ENCODE measurements at regions of chr4 and their contacts with region 1.

Region 1: DNA sequence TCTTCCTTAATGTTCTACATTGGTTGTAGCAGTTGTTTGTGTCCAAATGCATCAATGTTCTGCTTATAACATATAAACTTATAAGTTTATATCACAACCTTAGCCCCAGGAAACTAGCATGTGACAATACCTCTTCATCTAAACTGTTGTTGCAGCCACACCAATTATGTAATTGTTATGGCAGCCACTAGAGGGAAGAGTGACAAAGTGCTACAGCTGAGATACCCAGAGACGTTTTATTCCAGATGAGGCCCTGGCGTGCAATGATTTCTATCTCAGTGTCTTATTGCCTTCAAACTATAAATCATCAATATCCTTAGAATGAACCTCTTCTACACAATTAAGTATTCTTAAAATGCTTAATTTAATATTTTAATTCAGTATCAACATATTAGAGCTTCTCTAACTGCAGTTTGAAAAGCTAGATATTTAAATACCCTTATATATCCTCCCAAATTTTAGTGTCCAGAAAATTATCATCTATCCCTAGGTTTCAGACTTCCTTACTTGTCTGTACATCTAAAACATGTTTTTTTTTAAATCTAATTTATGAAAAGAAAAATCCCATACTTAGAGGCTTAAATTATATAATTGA is 171.6 kb downstream of the PCDH10 start:
- DNase-seq: peak; percentile 51
- H3K4me3 ChIP-seq: no peak overlapping the region
- H3K27ac ChIP-seq: no peak overlapping the region
- H3K4me1 ChIP-seq: no peaks in the 10 kb centered on the region
- H3K27me3 ChIP-seq: no peaks in the 10 kb centered on the region
- CTCF ChIP-seq: peak; percentile 54 to 63
- POLR2A ChIP-seq: no peak

Region 2: DNA sequence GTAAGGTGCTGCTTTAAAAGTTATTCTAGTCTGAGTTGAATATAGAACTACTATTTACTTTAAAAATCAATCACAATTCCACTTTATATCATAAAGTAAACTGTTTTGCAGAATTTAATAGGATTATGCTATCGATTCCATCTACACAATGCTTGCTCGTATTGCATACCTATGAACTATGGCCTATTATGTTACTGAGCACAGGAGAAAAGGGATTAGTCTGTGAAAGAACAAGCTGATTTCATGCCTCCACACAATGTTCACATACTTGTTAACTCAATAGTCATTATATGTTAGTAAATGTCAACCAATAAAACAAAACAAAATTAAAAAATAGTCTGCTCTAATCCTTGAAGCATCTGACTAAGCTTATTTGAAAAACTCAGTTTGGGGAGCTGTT is 52.0 kb after region 1 on chr4:
- CTCF ChIA-PET with region 1: no interaction called
- POLR2A ChIA-PET with region 1: no interaction called
- dilution Hi-C with region 1: no loop called
- intact Hi-C with region 1: no loop called
- DNase-seq: no peak
- H3K4me3 ChIP-seq: no peak overlapping the region
- H3K27ac ChIP-seq: no peak overlapping the region
- H3K4me1 ChIP-seq: no peaks in the 10 kb centered on the region
- H3K27me3 ChIP-seq: no peaks in the 10 kb centered on the region
- CTCF ChIP-seq: no peak
- POLR2A ChIP-seq: no peak

Region 3: GRCh38 chr4:133424605-133425004 is 103.9 kb after region 1 on chr4:
- CTCF ChIA-PET with region 1: no interaction called
- POLR2A ChIA-PET with region 1: no interaction called
- dilution Hi-C with region 1: no loop called
- intact Hi-C with region 1: no loop called
- DNase-seq: no peak
- H3K4me3 ChIP-seq: no peak overlapping the region
- H3K27ac ChIP-seq: no peak overlapping the region
- H3K4me1 ChIP-seq: no peaks in the 10 kb centered on the region
- H3K27me3 ChIP-seq: no peaks in the 10 kb centered on the region
- CTCF ChIP-seq: no peak
- POLR2A ChIP-seq: no peak

Region 4: DNA sequence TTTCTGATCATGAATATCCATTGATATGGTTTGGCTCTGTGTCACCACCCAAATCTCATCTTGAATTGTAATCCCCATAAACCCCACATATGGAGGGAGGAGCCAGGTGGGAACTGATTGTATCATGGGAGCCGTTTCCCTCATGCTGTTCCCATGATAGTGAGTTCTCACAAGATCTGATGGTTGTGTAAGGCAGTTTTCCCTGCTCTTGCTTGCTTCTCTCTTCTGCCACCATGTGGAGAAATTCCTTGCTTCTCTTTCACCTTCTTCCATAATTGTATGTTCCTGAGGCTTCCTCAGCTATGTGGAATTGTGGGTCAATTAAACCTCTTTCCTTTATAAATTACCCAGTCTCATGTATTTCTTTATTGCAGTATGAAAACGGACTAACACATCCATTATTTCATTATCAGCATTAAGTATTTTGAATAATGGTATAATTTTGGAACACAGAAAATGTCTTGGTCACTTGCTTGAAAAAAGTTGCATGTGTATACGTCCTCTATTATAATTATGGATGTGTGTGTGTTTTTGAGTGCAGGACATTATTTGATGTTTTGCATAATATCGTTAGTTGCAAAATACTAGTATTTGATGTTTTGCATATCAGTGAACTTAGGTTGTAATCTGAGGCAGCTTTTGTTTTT is 163.1 kb after region 1 on chr4:
- CTCF ChIA-PET with region 1: interaction called, 23 read pairs
- POLR2A ChIA-PET with region 1: no interaction called
- dilution Hi-C with region 1: no loop called
- intact Hi-C with region 1: loop called (anchors 2 kb)
- DNase-seq: peak; percentile 55
- H3K4me3 ChIP-seq: no peak overlapping the region
- H3K27ac ChIP-seq: no peak overlapping the region
- H3K4me1 ChIP-seq: no peaks in the 10 kb centered on the region
- H3K27me3 ChIP-seq: no peaks in the 10 kb centered on the region
- CTCF ChIP-seq: peak; percentile 20 to 42
- POLR2A ChIP-seq: no peak

Region 5: GRCh38 chr4:133550436-133550835 is 229.8 kb after region 1 on chr4:
- CTCF ChIA-PET with region 1: no interaction called
- POLR2A ChIA-PET with region 1: no interaction called
- dilution Hi-C with region 1: no loop called
- intact Hi-C with region 1: no loop called
- DNase-seq: no peak
- H3K4me3 ChIP-seq: no peak overlapping the region
- H3K27ac ChIP-seq: no peak overlapping the region
- H3K4me1 ChIP-seq: no peaks in the 10 kb centered on the region
- H3K27me3 ChIP-seq: no peaks in the 10 kb centered on the region
- CTCF ChIP-seq: no peak
- POLR2A ChIP-seq: no peak

Region 6: GRCh38 chr4:133683967-133684366 is 363.3 kb after region 1 on chr4:
- CTCF ChIA-PET with region 1: no interaction called
- POLR2A ChIA-PET with region 1: no interaction called
- dilution Hi-C with region 1: no loop called
- intact Hi-C with region 1: no loop called
- DNase-seq: no peak
- H3K4me3 ChIP-seq: no peak overlapping the region
- H3K27ac ChIP-seq: no peak overlapping the region
- H3K4me1 ChIP-seq: no peaks in the 10 kb centered on the region
- H3K27me3 ChIP-seq: no peaks in the 10 kb centered on the region
- CTCF ChIP-seq: no peak
- POLR2A ChIP-seq: no peak

Region 7: DNA sequence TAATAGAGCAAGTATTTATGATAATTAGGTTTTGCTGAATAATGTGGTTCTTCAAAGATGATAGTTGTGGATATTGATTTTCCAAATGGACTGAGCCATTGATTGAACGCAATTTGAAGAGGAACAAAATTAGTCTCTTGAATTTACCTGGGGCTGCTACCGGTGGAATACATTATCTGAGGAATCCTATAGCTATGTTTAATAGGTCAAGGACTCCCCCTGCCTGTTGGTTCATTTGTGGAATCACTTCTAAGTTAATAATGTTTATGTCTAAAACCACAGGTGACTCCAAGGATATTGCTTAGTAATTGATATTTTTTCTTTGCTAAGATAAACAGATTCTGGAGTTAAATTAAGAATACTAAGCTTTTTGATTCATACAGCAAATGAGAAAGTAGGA is 1456.9 kb after region 1 on chr4:
- CTCF ChIA-PET with region 1: interaction called, 26 read pairs
- POLR2A ChIA-PET with region 1: no interaction called
- dilution Hi-C with region 1: no loop called
- intact Hi-C with region 1: loop called (anchors 5 kb)
- DNase-seq: peak; percentile 64
- H3K4me3 ChIP-seq: no peak overlapping the region
- H3K27ac ChIP-seq: no peak overlapping the region
- H3K4me1 ChIP-seq: peaks cover 2% of the 10 kb centered on the region
- H3K27me3 ChIP-seq: no peaks in the 10 kb centered on the region
- CTCF ChIP-seq: peak in 1 of 2 donors; percentile 13
- POLR2A ChIP-seq: no peak

Region 8: GRCh38 chr4:134935320-134935719 is 1614.6 kb after region 1 on chr4:
- CTCF ChIA-PET with region 1: no interaction called
- POLR2A ChIA-PET with region 1: no interaction called
- dilution Hi-C with region 1: no loop called
- intact Hi-C with region 1: loop called (anchors 1 kb)
- DNase-seq: peak; percentile 49
- H3K4me3 ChIP-seq: no peak overlapping the region
- H3K27ac ChIP-seq: no peak overlapping the region
- H3K4me1 ChIP-seq: no peaks in the 10 kb centered on the region
- H3K27me3 ChIP-seq: no peaks in the 10 kb centered on the region
- CTCF ChIP-seq: peak in 1 of 2 donors; percentile 47
- POLR2A ChIP-seq: no peak

Measured in endothelial cell of umbilical vein (primary cell).